ENCODE measurements at regions of chr4 and their contacts with region 1.

Region 1: DNA sequence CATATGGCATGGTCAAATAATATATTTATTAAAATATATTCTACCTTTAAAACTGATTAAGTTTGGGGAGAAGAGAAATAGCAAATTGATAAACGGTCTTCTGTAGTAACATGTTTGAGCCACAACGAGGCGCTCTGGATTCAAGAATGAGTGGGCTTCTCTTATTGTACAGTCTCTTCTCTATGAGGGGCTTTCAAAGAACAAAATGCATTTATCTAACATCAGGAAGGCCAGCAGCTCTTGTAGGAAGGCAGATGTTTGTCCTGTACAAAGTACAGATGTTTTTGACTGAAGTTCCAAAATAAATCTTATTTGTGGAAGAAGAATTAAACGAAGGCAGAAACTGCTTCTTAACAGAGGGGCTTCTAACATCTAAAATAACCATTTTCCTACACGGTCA is 153.6 kb downstream of the RASL11B start:
- DNase-seq: no peak
- CTCF ChIP-seq: peak; percentile 71

Region 2: GRCh38 chr4:54217642-54218495 is 1202.2 kb after region 1 on chr4:
- in situ Hi-C with region 1: loop called (anchors 25 kb)
- DNase-seq: peak; percentile 73
- CTCF ChIP-seq: peak; percentile 76